Left cardiac atrium (tissue), 4 donors: ENCODE measurements at regions of chr12 and their contacts with region 1.

Region 1: DNA sequence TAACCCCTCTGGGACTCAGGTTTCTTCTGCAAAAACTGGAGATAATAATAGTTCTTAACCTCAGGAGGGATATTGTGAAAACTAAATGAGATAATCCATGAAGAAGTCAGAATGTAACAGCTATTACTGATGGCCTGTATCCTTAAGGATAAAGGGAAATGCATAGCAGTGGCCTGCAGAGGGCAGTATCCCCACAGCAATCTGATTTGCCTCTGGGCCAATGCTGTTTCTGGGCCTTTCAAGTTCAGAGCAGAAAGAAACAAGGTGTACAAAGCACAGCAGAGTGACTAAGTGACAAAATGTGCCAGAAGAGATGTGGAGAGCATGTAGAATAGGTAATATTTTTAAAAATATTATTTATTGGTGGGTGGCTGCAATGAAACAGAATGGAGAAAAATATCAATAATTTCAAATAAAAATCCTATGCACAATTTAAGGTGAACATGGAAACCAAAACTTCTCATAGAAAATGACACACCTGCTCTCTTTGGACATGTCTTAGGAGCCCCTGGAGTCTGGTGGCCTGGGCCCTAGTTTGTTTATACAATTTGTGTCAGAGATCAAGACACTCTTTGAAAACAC is 90.3 kb downstream of the C12orf75 start:
- DNase-seq: peak; percentile 75
- ATAC-seq: peak; percentile 87 to 90

Region 2: GRCh38 chr12:104877123-104877705 is 543.5 kb before region 1 on chr12:
- intact Hi-C with region 1: no loop called
- DNase-seq: no peak
- ATAC-seq: peak; percentile 72 to 92

Region 3: GRCh38 chr12:105341010-105341409 is 79.7 kb before region 1 on chr12:
- intact Hi-C with region 1: no loop called
- DNase-seq: no peak
- ATAC-seq: no peak

Region 4: GRCh38 chr12:105659355-105660075 is 238.8 kb after region 1 on chr12:
- intact Hi-C with region 1: loop called in 1 of 2 experiments (anchors 10 kb)
- DNase-seq: peak; percentile 40
- ATAC-seq: peak; percentile 85 to 89

Region 5: DNA sequence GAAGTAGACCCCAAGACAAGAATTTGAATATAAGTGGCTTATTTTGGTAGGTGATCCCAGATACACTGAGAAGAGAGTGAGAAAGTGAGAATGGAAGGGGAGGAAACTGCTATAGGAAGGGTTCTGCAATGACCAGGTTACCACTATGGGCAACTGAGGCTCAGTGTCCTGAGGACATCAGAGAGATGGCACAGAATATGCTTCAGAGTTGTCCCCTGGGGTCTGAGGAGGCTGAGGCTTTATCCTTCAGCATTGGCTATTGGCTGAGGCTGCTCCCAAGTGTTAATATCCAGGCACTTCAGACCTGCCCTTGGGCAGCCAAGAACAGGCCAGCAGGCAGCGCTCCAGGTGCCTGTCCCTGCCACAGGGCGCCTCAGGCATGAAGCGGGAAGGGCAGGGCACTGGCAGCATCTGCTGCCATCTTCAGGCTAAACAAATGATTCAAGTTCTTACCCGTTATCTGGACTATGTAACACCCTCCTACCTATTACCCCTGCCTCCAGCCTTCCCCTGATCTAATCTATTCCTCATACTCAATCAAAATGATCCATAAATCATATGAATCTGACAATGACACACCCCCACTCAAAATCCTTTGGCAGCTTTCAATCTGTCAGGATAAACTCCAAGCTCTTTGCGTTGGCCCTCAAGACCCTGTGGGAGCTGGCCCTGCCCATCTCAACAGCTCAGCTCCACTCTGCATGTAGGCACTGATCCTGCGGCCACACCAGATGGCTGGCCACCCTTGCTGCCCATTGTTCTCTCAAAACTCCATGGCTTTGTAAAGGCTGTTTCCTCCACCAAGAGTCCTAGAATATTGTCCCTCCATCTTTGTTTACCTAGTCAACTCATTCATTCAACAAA is 784.7 kb after region 1 on chr12:
- intact Hi-C with region 1: loop called in 1 of 2 experiments (anchors 5 kb)
- DNase-seq: peak; percentile 49
- ATAC-seq: peak; percentile 94 to 98